Naive thymus-derived CD4-positive, alpha-beta T cell (primary cell): ENCODE measurements at regions of chr18 and their contacts with region 1.

Region 1: DNA sequence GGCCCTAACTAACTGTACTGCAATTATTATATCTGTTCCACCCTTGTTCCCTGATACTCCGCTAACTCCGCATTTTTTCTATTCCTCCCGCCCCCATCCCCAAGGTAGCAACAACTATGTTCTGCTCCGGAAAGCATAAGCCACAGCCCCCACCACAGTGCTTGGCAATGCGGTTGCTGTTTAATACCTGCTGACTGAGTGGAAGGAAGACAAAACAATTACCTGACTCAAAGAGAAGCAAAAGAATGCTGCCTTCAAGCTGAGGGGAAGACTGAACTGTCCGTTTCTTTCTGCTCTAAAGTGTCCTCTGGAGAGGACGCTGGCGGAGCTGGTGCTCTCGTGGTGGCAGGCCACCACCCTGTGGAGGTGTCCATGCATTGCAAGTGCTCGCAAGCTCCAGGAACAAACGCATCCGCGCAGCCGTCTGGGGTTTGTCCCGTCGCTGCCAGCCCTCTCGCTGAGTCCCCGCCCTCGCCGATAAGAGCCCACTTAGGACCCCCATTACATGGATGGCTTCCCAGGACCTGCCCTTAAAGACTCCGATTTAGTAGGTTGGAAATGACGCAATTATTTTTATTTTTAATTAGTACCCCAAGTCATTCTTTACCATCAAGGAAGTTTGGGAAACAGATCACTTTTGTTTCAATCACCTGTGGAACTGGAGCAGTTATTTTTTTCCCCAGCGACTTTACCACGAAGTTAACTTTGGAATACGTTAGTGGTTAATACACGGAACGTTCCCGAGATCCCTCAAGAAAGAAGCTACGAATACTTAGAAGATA is 1.6 kb upstream of the MYL12A start:
- DNase-seq: peak; percentile 56 to 79 (median 72)
- ATAC-seq: peak; percentile 78
- H3K4me3 ChIP-seq: peak overlapping the region; percentile 97
- H3K4me3 Mint-ChIP-seq: peak overlapping the region; percentile 87 to 99 (median 97)
- H3K27ac ChIP-seq: peak overlapping the region; percentile 80
- H3K27ac Mint-ChIP-seq: peak overlapping the region; percentile 77 to 99 (median 97)
- H3K4me1 ChIP-seq: peaks cover 12 to 18% of the 10 kb centered on the region in 2 donors
- H3K4me1 Mint-ChIP-seq: peaks cover 19 to 34% (median 32%) of the 10 kb centered on the region in 7 donors
- H3K27me3 ChIP-seq: no peaks in the 10 kb centered on the region
- H3K27me3 Mint-ChIP-seq: peaks cover 0 to 2% (median 0%) of the 10 kb centered on the region in 5 donors

Region 2: DNA sequence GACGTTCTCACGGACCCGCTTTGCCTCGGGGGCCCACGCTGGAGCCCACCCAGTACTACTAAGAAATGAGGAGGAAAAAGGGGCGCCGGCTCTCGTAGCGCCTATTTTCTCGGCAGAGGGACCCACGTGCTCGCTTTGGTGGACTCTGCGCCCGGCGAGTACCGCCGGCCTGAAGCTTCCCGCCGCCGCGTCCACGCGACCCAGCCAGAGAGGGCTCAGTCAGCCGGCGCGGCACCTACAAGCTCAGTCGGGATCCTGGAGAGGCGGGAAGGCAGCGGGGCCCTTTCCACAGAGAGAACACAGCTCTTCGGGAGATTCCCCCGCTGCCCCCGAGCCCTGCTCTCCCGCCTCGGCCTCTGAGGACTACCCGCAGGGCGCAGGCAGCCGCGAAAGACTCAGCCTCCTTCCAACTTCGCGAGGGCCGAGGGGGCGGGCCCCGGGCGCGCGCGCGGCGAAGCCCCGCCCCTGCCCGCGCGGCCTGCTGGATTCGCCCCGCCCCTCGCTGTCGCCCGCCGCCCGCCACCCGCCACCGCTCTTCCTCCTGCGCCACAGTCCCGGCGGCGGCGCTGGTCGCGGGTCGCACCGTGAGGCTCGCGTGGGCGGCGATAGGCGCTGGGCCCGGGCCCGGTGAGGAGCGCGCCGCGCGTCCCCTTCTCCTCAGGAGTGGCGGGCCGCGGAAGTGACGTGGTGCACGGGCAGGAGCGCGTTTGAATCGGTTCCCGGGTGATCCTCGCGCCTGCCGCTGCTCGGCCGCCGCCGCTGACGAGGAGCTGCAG is 590.7 kb before region 1 on chr18 and contains the start of gene SMCHD1:
- CTCF ChIA-PET with region 1: no interaction called
- POLR2A ChIA-PET with region 1: interaction called, 4 read pairs
- intact Hi-C with region 1: loop called (anchors 1 to 2 kb)
- DNase-seq: peak; percentile 83 to 95 (median 90)
- ATAC-seq: peak; percentile 88
- H3K4me3 ChIP-seq: peak within 1 kb of the TSS; percentile 97
- H3K4me3 Mint-ChIP-seq: peak within 1 kb of the TSS; percentile 91 to 99 (median 95)
- H3K27ac ChIP-seq: peak within 1 kb of the TSS; percentile 100
- H3K27ac Mint-ChIP-seq: peak within 1 kb of the TSS; percentile 91 to 99 (median 96)
- H3K4me1 ChIP-seq: peaks cover 23 to 38% of the 10 kb centered on the region in 2 donors
- H3K4me1 Mint-ChIP-seq: peaks cover 23 to 66% (median 50%) of the 10 kb centered on the region in 7 donors
- H3K27me3 ChIP-seq: no peaks in the 10 kb centered on the region
- H3K27me3 Mint-ChIP-seq: no peaks in the 10 kb centered on the region
- total RNA-seq, gene SMCHD1: 181 to 305 (median 236) TPM

Region 3: DNA sequence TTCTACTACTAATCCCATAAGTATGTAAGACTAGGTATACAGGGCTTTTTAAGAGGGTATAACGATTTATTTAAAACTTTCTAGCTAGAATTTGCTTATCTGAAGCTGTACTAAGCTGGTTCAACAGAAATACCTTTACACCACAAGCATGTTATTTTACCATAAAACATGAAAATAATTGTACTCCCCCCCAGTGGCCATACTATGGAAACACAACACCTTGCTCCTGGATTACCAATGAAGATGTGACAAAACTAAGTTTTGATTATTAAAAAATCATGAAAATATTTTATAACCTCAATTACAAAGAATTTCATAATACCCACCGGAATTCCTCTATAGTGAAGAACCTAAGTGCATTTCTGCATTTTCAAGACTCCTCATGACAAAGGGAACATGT is 260.4 kb before region 1 on chr18:
- CTCF ChIA-PET with region 1: interaction called, 7 read pairs
- POLR2A ChIA-PET with region 1: interaction called, 10 read pairs
- intact Hi-C with region 1: loop called (anchors 2 kb)
- DNase-seq: peak in 7 of 9 donors; percentile 56 to 75 (median 66)
- ATAC-seq: peak; percentile 79
- H3K4me3 ChIP-seq: no peak overlapping the region
- H3K4me3 Mint-ChIP-seq: peak overlapping the region in 1 of 10 donors; percentile 27
- H3K27ac ChIP-seq: no peak overlapping the region
- H3K27ac Mint-ChIP-seq: peak overlapping the region in 7 of 9 donors; percentile 0 to 98 (median 67)
- H3K4me1 ChIP-seq: peaks cover 19 to 41% of the 10 kb centered on the region in 2 donors
- H3K4me1 Mint-ChIP-seq: peaks cover 34 to 80% (median 73%) of the 10 kb centered on the region in 7 donors
- H3K27me3 ChIP-seq: no peaks in the 10 kb centered on the region
- H3K27me3 Mint-ChIP-seq: no peaks in the 10 kb centered on the region

Region 4: GRCh38 chr18:3062798-3063680 is 183.0 kb before region 1 on chr18:
- CTCF ChIA-PET with region 1: interaction called, 17 read pairs
- POLR2A ChIA-PET with region 1: interaction called, 34 read pairs
- intact Hi-C with region 1: loop called (anchors 1 kb)
- DNase-seq: peak; percentile 47 to 76 (median 67)
- ATAC-seq: peak; percentile 59
- H3K4me3 ChIP-seq: peak overlapping the region; percentile 55
- H3K4me3 Mint-ChIP-seq: peak overlapping the region; percentile 56 to 83 (median 77)
- H3K27ac ChIP-seq: peak overlapping the region; percentile 96
- H3K27ac Mint-ChIP-seq: peak overlapping the region; percentile 91 to 99 (median 96)
- H3K4me1 ChIP-seq: peaks cover 60 to 70% of the 10 kb centered on the region in 2 donors
- H3K4me1 Mint-ChIP-seq: peaks cover 46 to 74% (median 71%) of the 10 kb centered on the region in 7 donors
- H3K27me3 ChIP-seq: no peaks in the 10 kb centered on the region
- H3K27me3 Mint-ChIP-seq: no peaks in the 10 kb centered on the region

Region 5: GRCh38 chr18:3209859-3210569 is 36.0 kb before region 1 on chr18:
- CTCF ChIA-PET with region 1: interaction called, 3 read pairs
- POLR2A ChIA-PET with region 1: interaction called, 3 read pairs
- intact Hi-C with region 1: loop called in 1 of 2 experiments (anchors 1 kb)
- DNase-seq: no peak
- ATAC-seq: no peak
- H3K4me3 ChIP-seq: no peak overlapping the region
- H3K4me3 Mint-ChIP-seq: no peak overlapping the region
- H3K27ac ChIP-seq: no peak overlapping the region
- H3K27ac Mint-ChIP-seq: peak overlapping the region in 2 of 9 donors; percentile 26 to 59
- H3K4me1 ChIP-seq: no peaks in the 10 kb centered on the region
- H3K4me1 Mint-ChIP-seq: peaks cover 0 to 18% (median 12%) of the 10 kb centered on the region in 7 donors
- H3K27me3 ChIP-seq: no peaks in the 10 kb centered on the region
- H3K27me3 Mint-ChIP-seq: peaks cover 0 to 2% (median 0%) of the 10 kb centered on the region in 5 donors

Region 6: DNA sequence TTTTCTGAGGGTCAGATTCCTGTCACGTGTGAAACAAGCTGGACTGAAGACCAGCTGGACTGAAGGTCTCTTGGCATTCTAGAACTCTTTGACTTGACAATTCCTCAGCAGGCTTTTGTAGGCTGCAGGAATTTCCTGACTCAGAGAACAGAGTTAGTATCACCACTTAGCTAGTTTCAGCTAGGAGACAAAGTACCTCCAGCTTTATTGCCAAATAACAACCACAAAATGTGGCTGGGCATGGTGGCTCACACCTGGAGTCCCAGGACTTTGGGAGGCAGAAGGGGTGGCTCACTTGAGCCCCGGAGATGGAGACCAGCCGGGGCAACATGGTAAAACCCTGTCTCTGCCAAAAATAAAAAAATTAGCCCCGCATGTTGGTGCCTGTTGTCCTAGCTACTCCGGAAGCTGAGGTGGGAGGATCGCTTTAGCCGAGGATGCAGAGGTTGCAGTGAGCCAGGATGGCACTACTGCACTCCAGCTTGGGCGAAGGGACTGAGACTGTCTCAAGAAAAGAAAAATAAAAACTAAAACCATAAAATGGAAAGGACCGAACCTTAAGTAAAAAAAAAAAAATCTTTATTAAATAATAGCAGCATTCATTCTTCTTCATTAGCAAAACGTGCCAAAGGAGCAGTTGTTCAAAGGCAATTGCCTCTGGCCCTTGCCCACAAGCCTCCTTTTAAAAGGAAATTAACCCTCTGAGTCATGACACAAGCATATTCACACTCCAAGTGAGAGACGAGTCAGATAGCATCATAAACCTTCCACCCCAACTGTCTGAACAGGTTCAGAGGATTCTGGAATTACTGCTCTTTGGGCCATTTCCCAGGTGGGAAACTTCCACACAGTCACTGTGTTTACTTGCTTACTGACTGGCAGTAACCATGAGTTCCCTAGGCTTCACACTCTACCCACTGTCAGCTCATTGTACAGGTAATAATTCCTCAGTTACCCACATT is 104.8 kb after region 1 on chr18:
- CTCF ChIA-PET with region 1: no interaction called
- POLR2A ChIA-PET with region 1: no interaction called
- intact Hi-C with region 1: no loop called
- DNase-seq: no peak
- ATAC-seq: no peak
- H3K4me3 ChIP-seq: no peak overlapping the region
- H3K4me3 Mint-ChIP-seq: no peak overlapping the region
- H3K27ac ChIP-seq: no peak overlapping the region
- H3K27ac Mint-ChIP-seq: no peak overlapping the region
- H3K4me1 ChIP-seq: no peaks in the 10 kb centered on the region
- H3K4me1 Mint-ChIP-seq: peaks cover 0 to 3% (median 0%) of the 10 kb centered on the region in 7 donors
- H3K27me3 ChIP-seq: no peaks in the 10 kb centered on the region
- H3K27me3 Mint-ChIP-seq: peaks cover 0 to 17% (median 4%) of the 10 kb centered on the region in 5 donors

Region 7: GRCh38 chr18:3593904-3594661 is 348.0 kb after region 1 on chr18:
- CTCF ChIA-PET with region 1: no interaction called
- POLR2A ChIA-PET with region 1: interaction called, 33 read pairs
- intact Hi-C with region 1: loop called (anchors 1 kb)
- DNase-seq: peak; percentile 71 to 96 (median 93)
- ATAC-seq: peak; percentile 82
- H3K4me3 ChIP-seq: peak overlapping the region; percentile 73
- H3K4me3 Mint-ChIP-seq: peak overlapping the region; percentile 84 to 97 (median 93)
- H3K27ac ChIP-seq: peak overlapping the region; percentile 89
- H3K27ac Mint-ChIP-seq: peak overlapping the region; percentile 98 to 100 (median 99)
- H3K4me1 ChIP-seq: peaks cover 31 to 40% of the 10 kb centered on the region in 2 donors
- H3K4me1 Mint-ChIP-seq: peaks cover 32 to 66% (median 57%) of the 10 kb centered on the region in 7 donors
- H3K27me3 ChIP-seq: no peaks in the 10 kb centered on the region
- H3K27me3 Mint-ChIP-seq: no peaks in the 10 kb centered on the region